ENCODE measurements at regions of chr12 and their contacts with region 1.

Region 1: GRCh38 chr12:25958428-25959070 is at the start of gene RASSF8:
- DNase-seq: peak; percentile 62
- H3K4me3 ChIP-seq: peak within 1 kb of the TSS; percentile 58 to 86 (median 72)
- H3K27ac ChIP-seq: peak within 1 kb of the TSS; percentile 89 to 94 (median 92)
- H3K4me1 ChIP-seq: peaks cover 0 to 26% (median 18%) of the 10 kb centered on the region in 4 donors
- H3K27me3 ChIP-seq: peaks cover 34% of the 10 kb centered on the region
- CTCF ChIP-seq: no peak
- EP300 ChIP-seq: no peak
- POLR2A ChIP-seq: no peak
- total RNA-seq, gene RASSF8: 13.1 to 332 (median 23.5) TPM

Region 2: GRCh38 chr12:25249931-25250738 is 708.4 kb before region 1 on chr12:
- in situ Hi-C with region 1: no loop called
- intact Hi-C with region 1: loop called (anchors 5 kb)
- DNase-seq: peak; percentile 69
- H3K4me3 ChIP-seq: peak overlapping the region; percentile 91 to 100 (median 97)
- H3K27ac ChIP-seq: peak overlapping the region; percentile 98 to 99 (median 98)
- H3K4me1 ChIP-seq: peaks cover 0 to 35% (median 16%) of the 10 kb centered on the region in 4 donors
- H3K27me3 ChIP-seq: no peaks in the 10 kb centered on the region
- CTCF ChIP-seq: no peak
- EP300 ChIP-seq: no peak
- POLR2A ChIP-seq: peak; percentile 30

Region 3: DNA sequence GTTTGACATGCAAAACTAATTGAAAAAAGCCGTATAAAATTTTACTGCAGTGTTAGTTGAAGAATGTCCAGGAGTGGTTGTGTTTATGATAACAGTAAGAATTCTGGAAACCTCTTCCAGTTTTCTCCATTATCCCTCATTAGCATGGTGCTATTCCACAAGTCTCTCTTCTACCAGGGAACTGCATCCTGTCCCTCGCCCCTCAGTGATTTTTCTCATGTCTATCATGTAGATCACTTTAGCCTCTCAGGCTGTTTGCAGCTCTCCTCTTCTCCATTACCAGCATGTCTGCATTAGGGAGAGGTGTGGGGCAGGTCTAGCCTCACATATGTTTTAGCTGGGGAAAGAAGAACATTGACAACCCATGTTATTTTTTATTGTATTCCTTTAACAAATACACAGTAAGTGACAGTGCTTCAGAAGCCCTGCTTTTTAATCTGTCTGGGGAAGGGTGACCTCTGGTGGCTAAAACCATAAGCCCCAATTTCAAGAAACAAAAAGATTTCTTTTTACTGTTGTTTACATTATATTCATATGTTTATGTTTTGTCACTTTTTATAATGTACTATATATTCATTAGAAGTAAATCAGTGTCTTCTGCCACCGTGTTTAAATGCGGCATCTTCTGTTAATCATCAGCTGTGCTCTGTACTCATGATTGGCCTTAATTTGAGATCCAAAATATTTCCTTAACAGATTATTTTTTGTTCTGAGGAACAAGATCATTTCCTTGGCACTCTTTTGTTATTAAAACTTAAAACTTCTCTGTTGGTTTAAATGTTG is 70.6 kb after region 1 on chr12:
- in situ Hi-C with region 1: no loop called
- intact Hi-C with region 1: loop called (anchors 5 kb)
- DNase-seq: peak; percentile 15
- H3K4me3 ChIP-seq: no peak overlapping the region
- H3K27ac ChIP-seq: peak overlapping the region in 3 of 4 donors; percentile 25 to 39 (median 27)
- H3K4me1 ChIP-seq: peaks cover 5 to 33% (median 8%) of the 10 kb centered on the region in 4 donors
- H3K27me3 ChIP-seq: no peaks in the 10 kb centered on the region
- CTCF ChIP-seq: peak; percentile 60 to 79 (median 75)
- EP300 ChIP-seq: no peak
- POLR2A ChIP-seq: no peak

Region 4: GRCh38 chr12:26077915-26078702 is 119.6 kb after region 1 on chr12:
- in situ Hi-C with region 1: no loop called
- intact Hi-C with region 1: no loop called
- DNase-seq: no peak
- H3K4me3 ChIP-seq: no peak overlapping the region
- H3K27ac ChIP-seq: no peak overlapping the region
- H3K4me1 ChIP-seq: no peaks in the 10 kb centered on the region
- H3K27me3 ChIP-seq: no peaks in the 10 kb centered on the region
- CTCF ChIP-seq: no peak
- EP300 ChIP-seq: no peak
- POLR2A ChIP-seq: no peak